AG04450 (cell line): ENCODE measurements at regions of chr6 and their contacts with region 1.

Region 1: GRCh38 chr6:116268589-116269293 is 11.0 kb downstream of the TSPYL1 start:
- DNase-seq: peak; percentile 65
- H3K4me3 ChIP-seq: no peak overlapping the region
- H3K27ac ChIP-seq: no peak overlapping the region
- H3K27me3 ChIP-seq: no peaks in the 10 kb centered on the region
- CTCF ChIP-seq: peak; percentile 96

Region 2: GRCh38 chr6:116217069-116217468 is 51.7 kb before region 1 on chr6:
- CTCF ChIA-PET with region 1: interaction called, 66 read pairs
- POLR2A ChIA-PET with region 1: no interaction called
- DNase-seq: no peak
- H3K4me3 ChIP-seq: no peak overlapping the region
- H3K27ac ChIP-seq: no peak overlapping the region
- H3K27me3 ChIP-seq: no peaks in the 10 kb centered on the region
- CTCF ChIP-seq: peak; percentile 68

Region 3: DNA sequence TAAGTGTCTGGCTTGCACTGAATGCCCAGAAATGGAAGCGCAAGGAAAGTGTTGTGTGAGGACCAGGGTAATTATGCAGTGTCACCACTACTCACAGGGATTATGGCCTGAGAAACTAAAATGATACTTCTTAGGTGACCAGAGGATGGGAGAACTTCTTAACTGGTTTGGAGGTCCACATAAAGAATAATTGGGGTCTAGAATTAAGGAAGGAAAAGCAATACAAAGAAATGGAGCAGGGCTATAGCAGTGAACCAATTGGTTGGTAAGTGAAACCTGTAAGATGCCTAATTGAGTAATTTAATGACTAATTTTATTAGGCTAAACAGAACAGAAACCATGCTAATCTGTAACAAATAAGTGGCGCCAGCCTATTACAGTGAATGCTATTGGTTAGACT is 20.2 kb before region 1 on chr6:
- CTCF ChIA-PET with region 1: interaction called, 45 read pairs
- POLR2A ChIA-PET with region 1: interaction called, 3 read pairs
- DNase-seq: no peak
- H3K4me3 ChIP-seq: no peak overlapping the region
- H3K27ac ChIP-seq: no peak overlapping the region
- H3K27me3 ChIP-seq: no peaks in the 10 kb centered on the region
- CTCF ChIP-seq: no peak

Region 4: GRCh38 chr6:116419069-116419786 is 150.5 kb after region 1 on chr6:
- CTCF ChIA-PET with region 1: interaction called, 18 read pairs
- POLR2A ChIA-PET with region 1: no interaction called
- DNase-seq: no peak
- H3K4me3 ChIP-seq: no peak overlapping the region
- H3K27ac ChIP-seq: no peak overlapping the region
- H3K27me3 ChIP-seq: no peaks in the 10 kb centered on the region
- CTCF ChIP-seq: no peak

Region 5: DNA sequence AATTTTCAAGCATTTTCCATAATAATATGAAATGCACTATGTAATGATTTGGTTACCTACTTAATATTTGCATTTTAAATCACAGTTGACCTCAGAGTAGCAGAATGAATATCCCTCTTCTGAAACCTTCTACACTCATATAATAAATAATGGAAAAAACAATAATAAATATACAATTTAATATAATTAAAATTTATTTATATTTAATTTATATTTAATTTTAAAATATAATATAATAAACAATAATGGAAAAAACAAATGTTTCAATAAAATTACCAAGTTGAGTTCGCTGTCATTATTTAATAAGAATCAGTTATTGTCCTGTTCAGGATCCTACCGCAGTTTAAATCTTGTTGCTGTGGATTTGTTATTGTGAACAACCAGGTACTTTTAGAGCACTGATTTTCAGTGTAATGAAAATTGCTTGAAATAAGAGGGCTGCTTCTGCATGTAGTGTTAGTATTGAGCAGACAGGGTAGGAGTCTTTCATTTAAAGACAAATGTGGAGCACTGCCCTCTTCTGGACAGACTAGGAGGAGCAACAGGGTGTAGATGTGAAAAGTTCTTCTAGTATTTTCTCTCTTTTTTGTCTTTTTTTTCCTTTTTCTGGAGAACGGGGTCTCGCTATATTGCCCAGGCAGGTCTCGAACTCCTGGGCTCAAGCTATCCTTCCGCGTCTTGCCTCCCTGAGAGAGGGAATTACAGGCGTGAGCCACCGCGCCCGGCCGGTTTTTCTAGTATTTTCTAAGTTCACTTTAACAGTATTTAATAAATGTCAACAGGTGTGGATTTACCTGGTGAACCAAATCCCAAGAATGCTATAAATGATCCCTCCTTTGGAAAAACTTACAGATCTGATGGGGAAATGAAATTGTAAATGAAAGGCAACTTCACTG is 263.2 kb after region 1 on chr6:
- CTCF ChIA-PET with region 1: interaction called, 99 read pairs
- POLR2A ChIA-PET with region 1: interaction called, 3 read pairs
- DNase-seq: peak; percentile 52
- H3K4me3 ChIP-seq: no peak overlapping the region
- H3K27ac ChIP-seq: no peak overlapping the region
- H3K27me3 ChIP-seq: no peaks in the 10 kb centered on the region
- CTCF ChIP-seq: peak; percentile 82

Region 6: DNA sequence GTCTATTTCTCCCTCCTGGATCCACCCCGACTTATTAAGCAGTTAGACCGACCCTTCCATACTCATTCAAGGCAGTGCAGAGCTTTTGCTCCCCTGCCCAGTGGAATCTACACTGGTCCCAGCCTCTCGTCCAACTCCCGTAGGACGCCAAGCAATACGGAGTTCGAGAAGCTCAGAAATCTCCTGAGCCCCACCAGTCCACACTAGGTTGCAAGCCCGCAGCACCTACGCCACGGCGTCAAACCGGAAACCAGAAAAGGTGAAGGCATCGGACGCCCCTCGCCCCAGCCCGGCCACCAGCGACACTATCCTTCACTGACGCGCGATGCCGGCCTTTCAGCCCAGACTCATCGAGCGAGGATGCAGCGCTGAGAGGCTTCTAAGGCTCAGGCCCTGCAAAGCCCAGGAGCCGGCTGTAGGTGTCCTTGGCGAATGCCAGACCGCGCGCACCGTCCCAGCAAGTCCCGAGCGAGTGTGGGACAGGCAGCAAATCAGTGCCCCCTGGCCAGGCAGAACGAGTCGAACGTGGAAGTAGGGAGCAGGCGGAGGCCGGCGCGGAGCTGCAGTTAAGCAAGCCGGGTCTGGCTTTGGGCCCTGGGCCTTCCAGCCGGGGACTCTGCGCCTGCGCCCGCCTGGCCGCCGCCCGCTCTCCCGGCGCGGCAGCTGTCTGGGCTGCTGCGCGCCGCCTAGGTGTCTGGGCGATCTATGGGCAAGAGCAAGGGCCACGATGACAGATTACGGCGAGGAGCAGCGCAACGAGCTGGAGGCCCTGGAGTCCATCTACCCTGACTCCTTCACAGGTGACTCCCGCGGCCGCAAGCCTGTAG is 302.3 kb after region 1 on chr6 and contains the start of gene RWDD1:
- CTCF ChIA-PET with region 1: interaction called, 69 read pairs
- POLR2A ChIA-PET with region 1: interaction called, 4 read pairs
- DNase-seq: peak; percentile 99
- H3K4me3 ChIP-seq: peak within 1 kb of the TSS; percentile 95
- H3K27ac ChIP-seq: peak within 1 kb of the TSS; percentile 79
- H3K27me3 ChIP-seq: no peaks in the 10 kb centered on the region
- CTCF ChIP-seq: 0 out of 2 replicates have a peak, but pooled peaks have one; percentile 3
- polyA plus RNA-seq, gene RWDD1: 43.0 and 56.9 TPM in 2 replicates